ENCODE measurements at regions of chr12 and their contacts with region 1.

Region 1: GRCh38 chr12:51270067-51270970 is at the start of gene SMAGP:
- DNase-seq: peak; percentile 86
- ATAC-seq: peak; percentile 48
- H3K4me3 ChIP-seq: peak within 1 kb of the TSS; percentile 68
- H3K27ac ChIP-seq: peak within 1 kb of the TSS; percentile 97
- H3K4me1 ChIP-seq: peaks cover 46% of the 10 kb centered on the region
- H3K27me3 ChIP-seq: no peaks in the 10 kb centered on the region
- CTCF ChIP-seq: no peak
- total RNA-seq, gene SMAGP: 55.3 and 62.5 TPM in 2 replicates

Region 2: GRCh38 chr12:51047655-51048540 is 222.4 kb before region 1 on chr12 and contains the start of gene LETMD1:
- CTCF ChIA-PET with region 1: no interaction called
- POLR2A ChIA-PET with region 1: no interaction called
- intact Hi-C with region 1: loop called (anchors 5 kb)
- DNase-seq: peak; percentile 99
- ATAC-seq: peak; percentile 99
- H3K4me3 ChIP-seq: peak within 1 kb of the TSS; percentile 88
- H3K27ac ChIP-seq: peak within 1 kb of the TSS; percentile 79
- H3K4me1 ChIP-seq: peaks cover 12% of the 10 kb centered on the region
- H3K27me3 ChIP-seq: no peaks in the 10 kb centered on the region
- CTCF ChIP-seq: peak; percentile 93
- total RNA-seq, gene LETMD1: 46.9 and 47.1 TPM in 2 replicates

Region 3: DNA sequence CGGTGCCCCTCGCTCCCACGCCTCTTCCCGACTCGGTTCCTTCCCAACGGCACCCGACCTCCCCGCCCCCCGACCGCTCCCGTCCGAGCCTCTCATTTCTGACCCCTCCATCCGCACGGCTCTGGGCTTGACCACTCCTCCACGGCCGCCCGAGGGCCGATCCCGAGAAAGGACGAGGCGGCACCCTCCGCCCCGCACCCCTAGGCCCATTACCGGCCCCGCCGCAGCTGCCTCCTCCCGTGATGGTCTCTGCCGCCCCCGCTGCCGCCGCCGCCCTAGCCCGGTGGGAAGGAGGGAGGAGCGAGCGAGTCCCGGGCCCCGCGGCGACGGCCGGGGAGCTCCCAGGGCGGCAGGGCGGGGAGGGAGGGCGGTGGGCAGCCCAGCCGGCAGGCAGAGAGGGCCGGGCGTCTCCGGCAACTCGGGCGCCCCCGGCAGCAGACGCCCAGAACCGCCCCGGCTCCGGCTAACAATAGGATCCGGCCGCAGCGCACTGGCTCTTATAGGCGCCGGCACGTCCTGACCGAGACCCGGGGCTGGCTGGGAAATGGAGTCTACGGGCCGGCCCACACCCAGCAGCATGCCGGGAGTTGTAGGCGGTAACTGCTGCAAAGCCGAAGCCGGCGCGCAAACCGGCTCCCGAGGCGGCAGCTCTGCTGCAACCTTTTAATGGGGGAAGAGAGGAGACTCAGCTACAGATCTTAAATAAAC is 187.0 kb before region 1 on chr12 and contains the start of gene CSRNP2:
- CTCF ChIA-PET with region 1: interaction called, 8 read pairs
- POLR2A ChIA-PET with region 1: no interaction called
- intact Hi-C with region 1: loop called (anchors 5 kb)
- DNase-seq: peak; percentile 94
- ATAC-seq: peak; percentile 99
- H3K4me3 ChIP-seq: peak within 1 kb of the TSS; percentile 92
- H3K27ac ChIP-seq: no peak within 1 kb of the TSS
- H3K4me1 ChIP-seq: peaks cover 12% of the 10 kb centered on the region
- H3K27me3 ChIP-seq: no peaks in the 10 kb centered on the region
- CTCF ChIP-seq: no peak
- total RNA-seq, gene CSRNP2: 18.9 and 23.3 TPM in 2 replicates

Region 4: DNA sequence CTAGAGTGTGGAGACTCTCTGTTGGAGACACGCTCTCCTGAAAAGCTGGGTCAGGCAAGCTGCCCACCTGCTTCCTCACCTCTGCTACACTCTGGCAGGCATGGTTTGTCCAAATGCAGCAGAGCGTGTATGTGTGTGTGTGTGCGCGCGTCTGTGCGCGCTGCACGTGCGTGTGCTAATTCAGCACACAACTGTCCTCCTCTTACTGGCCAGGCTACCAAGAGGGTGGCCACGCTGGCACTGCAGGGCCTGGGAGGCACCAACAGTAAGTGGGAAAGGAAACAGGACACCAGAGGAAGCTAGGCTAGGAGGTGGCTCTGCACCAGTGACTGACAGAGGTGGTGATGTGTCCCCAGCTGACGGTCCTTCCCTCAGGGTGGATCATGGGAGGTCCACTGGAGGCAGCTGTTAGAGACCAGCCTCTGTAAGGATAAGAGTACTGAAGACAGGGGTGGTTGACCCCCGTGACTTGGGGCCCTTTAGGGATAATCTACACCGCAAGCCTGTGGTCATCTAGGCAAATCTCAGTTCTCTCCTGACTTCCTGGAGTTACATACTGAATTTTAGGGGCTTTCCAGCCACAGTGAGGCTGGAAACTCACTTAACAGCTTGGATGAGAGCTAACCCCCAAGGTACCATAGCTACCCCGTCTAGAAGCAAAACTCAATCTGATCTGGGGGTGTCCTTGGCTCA is 81.8 kb before region 1 on chr12:
- CTCF ChIA-PET with region 1: no interaction called
- POLR2A ChIA-PET with region 1: no interaction called
- intact Hi-C with region 1: no loop called
- DNase-seq: no peak
- ATAC-seq: no peak
- H3K4me3 ChIP-seq: no peak overlapping the region
- H3K27ac ChIP-seq: no peak overlapping the region
- H3K4me1 ChIP-seq: no peaks in the 10 kb centered on the region
- H3K27me3 ChIP-seq: no peaks in the 10 kb centered on the region
- CTCF ChIP-seq: no peak

Region 5: GRCh38 chr12:51307655-51308593 is 37.6 kb after region 1 on chr12:
- CTCF ChIA-PET with region 1: interaction called, 6 read pairs
- POLR2A ChIA-PET with region 1: interaction called, 10 read pairs
- intact Hi-C with region 1: loop called (anchors 1 kb)
- DNase-seq: peak; percentile 94
- ATAC-seq: peak; percentile 100
- H3K4me3 ChIP-seq: peak overlapping the region; percentile 46
- H3K27ac ChIP-seq: peak overlapping the region; percentile 91
- H3K4me1 ChIP-seq: peaks cover 19% of the 10 kb centered on the region
- H3K27me3 ChIP-seq: no peaks in the 10 kb centered on the region
- CTCF ChIP-seq: no peak

Measured in PC-3 (cell line).